ENCODE measurements at regions of chr4 and their contacts with region 1.

Region 1: DNA sequence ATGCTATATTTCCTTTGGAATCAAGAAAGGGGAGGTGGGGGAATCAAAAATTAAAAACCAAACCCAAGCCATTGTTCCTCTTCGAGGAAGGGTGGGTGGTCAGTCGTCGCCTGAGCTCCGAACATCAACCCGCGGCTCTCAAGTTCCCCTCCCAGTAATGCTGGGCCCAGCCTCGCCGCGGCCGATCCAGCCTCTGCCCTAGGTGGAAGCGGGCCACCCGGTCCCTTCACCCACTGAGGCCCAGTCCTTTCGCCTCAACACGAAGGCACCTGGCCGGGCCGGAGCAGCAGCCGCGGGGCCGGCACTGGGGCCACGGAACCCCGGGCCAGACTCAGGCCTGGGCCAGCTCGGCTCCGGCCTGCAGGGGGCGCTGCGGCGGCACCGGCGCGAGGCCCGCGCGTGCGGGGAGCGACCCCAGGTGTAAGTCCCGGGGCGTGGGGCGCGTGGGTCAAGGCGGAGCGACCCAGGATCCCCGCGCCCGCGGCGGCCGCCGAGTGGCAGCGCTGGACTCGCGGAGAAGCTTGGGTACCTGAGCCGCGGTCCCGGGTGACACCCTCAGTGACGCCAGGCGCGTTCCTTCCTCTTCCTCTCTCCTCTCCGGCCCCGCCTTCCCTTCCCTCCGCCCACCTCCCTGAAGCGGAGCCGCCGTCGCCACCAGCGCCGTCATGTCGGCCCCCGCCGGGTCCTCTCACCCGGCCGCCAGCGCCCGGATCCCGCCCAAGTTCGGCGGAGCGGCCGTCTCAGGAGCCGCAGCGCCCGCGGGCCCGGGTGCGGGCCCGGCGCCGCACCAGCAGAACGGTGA is at the start of gene SEC24B:
- DNase-seq: peak; percentile 89
- CTCF ChIP-seq: peak; percentile 89

Region 2: GRCh38 chr4:109278594-109279031 is 154.8 kb before region 1 on chr4:
- CTCF ChIA-PET with region 1: no interaction called
- POLR2A ChIA-PET with region 1: no interaction called
- DNase-seq: peak; percentile 30
- CTCF ChIP-seq: no peak

Region 3: DNA sequence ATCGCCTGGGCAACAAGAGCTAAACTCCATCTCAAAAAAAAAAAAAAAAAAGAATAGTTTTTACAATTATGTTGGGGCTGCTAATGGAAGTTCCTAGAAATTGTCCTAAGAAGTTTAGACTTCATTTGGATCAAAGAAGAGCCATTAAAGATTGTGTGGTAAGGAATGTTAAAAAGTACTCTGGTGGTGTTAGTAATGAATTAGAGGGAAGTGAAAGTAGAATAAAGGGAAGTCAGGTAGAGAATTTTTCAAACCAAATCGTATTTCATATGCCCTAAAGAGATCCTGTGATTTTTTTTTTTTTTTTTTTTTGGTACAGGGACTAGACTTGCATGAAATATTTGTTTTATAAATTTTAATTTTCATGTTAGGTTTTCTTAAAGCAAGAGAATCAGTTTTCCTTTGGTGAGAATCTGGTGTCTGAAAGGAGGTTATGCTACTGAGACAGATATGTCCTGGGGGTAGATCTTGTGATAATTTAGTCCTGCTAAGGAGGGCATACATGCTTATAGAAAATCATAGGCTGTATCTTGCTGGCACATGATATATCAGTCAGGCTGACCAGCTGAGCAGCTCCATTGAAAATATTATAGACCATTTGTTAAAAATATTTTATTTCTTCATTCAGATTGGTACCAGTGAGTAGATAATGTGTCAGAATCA is 10.9 kb after region 1 on chr4:
- CTCF ChIA-PET with region 1: interaction called, 39 read pairs
- POLR2A ChIA-PET with region 1: no interaction called
- DNase-seq: peak; percentile 38
- CTCF ChIP-seq: no peak

Region 4: GRCh38 chr4:109494563-109494962 is 61.2 kb after region 1 on chr4:
- CTCF ChIA-PET with region 1: interaction called, 11 read pairs
- POLR2A ChIA-PET with region 1: interaction called, 3 read pairs
- DNase-seq: no peak
- CTCF ChIP-seq: no peak

Region 5: DNA sequence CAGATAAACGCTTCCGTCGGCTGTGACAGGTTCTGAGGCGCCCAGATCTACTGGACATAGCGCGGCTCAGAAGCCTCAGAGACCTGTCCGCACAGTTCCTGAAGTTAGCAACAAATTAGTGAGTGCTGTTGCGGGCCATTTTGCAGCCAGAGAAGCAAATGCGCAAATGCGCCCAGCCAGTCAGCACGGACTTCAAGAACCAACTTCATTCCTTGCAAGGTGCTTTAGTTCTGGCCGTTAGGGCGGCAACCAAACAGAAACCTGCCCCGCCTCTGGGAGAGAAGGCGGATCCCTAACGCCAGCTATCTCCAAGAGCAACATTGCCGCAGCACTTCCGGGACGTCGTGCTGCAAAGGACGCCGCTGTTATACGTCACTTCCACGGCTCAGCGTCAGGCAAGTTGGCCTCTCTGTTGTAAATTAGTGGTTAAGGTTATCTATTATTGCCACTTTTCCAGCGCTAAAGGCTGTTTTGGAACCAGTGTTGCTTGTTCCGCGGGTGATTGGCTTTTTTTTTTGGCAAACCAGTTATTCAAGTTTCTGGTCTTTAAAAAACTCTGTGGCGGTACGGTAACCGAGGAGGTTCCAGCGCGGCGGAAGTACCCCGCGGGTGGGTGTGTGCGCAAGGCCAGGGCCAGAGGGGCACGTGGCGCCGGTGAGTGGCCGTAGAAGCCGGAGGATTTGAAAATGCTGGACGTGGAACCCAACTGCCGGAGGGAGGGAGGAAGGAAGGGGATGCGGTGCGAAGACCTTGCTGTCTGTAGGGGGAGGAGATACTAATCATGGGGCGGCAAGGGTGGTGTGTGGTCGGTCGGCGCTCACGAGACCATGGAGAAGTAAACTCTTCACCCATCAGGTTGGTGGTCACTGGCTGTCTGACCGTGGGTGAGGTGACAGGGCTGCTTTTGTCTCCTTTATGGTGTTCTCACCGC is 382.0 kb after region 1 on chr4 and contains the start of gene GAR1:
- CTCF ChIA-PET with region 1: interaction called, 24 read pairs
- POLR2A ChIA-PET with region 1: no interaction called
- DNase-seq: peak; percentile 93
- CTCF ChIP-seq: no peak

Region 6: GRCh38 chr4:109826719-109827118 is 393.3 kb after region 1 on chr4:
- CTCF ChIA-PET with region 1: interaction called, 26 read pairs
- POLR2A ChIA-PET with region 1: no interaction called
- DNase-seq: peak; percentile 18
- CTCF ChIP-seq: peak; percentile 37

Region 7: GRCh38 chr4:109977854-109978501 is 544.6 kb after region 1 on chr4:
- CTCF ChIA-PET with region 1: interaction called, 30 read pairs
- POLR2A ChIA-PET with region 1: no interaction called
- DNase-seq: no peak
- CTCF ChIP-seq: peak; percentile 45